ENCODE measurements at regions of chr3 and their contacts with region 1.

Region 1: GRCh38 chr3:136390574-136390973 is 140.4 kb downstream of the PCCB start:
- DNase-seq: no peak
- H3K4me3 ChIP-seq: no peak overlapping the region
- CTCF ChIP-seq: no peak

Region 2: GRCh38 chr3:135806317-135806716 is 584.3 kb before region 1 on chr3:
- CTCF ChIA-PET with region 1: no interaction called
- POLR2A ChIA-PET with region 1: no interaction called
- DNase-seq: no peak
- H3K4me3 ChIP-seq: no peak overlapping the region
- CTCF ChIP-seq: no peak

Region 3: DNA sequence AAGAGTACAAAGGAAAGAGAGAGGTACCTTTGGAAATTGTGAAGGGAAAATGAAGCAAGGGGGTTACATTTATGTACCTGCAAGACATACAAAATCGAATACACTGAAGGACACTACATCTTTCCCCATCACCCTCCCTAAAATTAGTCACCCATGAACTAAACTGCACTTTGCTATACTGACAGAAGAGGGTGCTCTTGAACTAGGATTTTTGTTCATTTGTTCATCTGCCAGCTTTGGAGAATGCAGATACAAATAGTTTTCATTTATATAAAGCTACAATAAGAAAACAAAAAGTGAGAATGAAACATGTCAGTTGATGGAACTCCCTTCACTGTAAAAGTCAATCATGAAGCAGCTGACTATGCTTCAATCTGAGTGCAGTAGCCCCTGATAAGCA is 84.7 kb before region 1 on chr3:
- CTCF ChIA-PET with region 1: interaction called, 18 read pairs
- POLR2A ChIA-PET with region 1: no interaction called
- DNase-seq: peak; percentile 28
- H3K4me3 ChIP-seq: no peak overlapping the region
- CTCF ChIP-seq: peak; percentile 57

Region 4: GRCh38 chr3:136350132-136350531 is 40.4 kb before region 1 on chr3:
- CTCF ChIA-PET with region 1: interaction called, 14 read pairs
- POLR2A ChIA-PET with region 1: no interaction called
- DNase-seq: peak; percentile 86
- H3K4me3 ChIP-seq: no peak overlapping the region; the same call in 1 of the 2 replicates
- CTCF ChIP-seq: no peak

Region 5: DNA sequence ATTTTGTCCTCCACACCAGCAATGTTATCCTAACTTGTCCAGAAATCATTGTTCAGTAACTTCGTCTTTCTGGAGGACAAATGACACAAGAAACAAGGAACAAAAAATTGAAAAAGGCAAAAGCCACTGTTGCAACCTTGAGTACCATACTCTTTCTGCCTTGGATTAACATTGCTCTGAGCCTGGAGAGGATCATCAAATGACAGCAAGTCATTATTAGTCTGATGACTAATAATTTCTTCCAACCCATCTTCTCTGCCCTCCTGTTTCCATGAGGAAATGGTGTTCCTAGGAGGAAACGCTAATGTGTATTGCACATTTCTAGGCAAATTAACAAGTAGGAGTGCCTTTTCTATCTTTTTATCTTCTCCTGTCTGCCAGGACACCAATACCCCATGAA is 13.5 kb after region 1 on chr3:
- CTCF ChIA-PET with region 1: interaction called, 33 read pairs
- POLR2A ChIA-PET with region 1: no interaction called
- DNase-seq: no peak
- H3K4me3 ChIP-seq: no peak overlapping the region
- CTCF ChIP-seq: no peak

Region 6: DNA sequence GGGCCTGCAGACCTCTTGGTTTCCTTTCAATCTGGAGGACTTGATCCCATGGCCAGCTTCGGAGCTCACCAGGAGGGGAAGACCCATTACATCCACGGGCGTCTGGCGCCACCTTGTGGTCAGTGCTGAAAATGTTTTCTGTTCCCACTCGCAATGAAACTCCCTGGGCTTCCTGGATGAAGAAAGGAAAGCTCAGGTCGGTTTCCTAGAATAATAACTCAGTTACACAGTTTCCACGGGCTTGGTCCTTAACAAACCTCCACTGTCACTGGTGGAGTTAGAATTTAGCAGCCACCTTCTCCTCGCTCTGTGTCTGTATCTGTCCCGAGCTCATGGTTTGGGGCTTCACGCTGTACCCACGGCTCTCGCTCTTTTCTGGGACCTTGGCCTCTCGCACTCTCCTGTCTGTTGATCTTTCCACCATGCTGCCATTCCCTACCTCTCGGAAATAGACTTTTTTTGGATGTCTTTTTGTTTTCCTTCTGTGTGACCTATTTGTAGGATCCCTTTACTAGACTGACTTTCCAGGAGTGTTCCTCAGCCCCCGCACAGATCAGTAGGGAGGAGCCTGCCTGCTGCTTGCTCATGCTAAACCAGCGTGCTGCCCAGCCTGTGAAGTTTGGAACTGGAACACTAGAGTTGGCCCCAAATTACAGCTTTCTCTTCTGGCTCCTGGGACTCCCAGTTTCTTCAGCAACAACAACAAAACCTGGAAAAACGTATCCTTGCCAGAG is 623.5 kb after region 1 on chr3:
- CTCF ChIA-PET with region 1: interaction called, 31 read pairs
- POLR2A ChIA-PET with region 1: no interaction called
- DNase-seq: peak; percentile 29
- H3K4me3 ChIP-seq: peak overlapping the region; percentile 67
- CTCF ChIP-seq: peak; percentile 75

Measured in AG04449 (cell line).